HCT116 (cell line): ENCODE measurements at regions of chr7 and their contacts with region 1.

Region 1: GRCh38 chr7:106176414-106177299 is 64.5 kb upstream of the SYPL1 start:
- DNase-seq: peak; percentile 51
- ATAC-seq: peak; percentile 92
- H3K4me3 ChIP-seq: no peak overlapping the region
- H3K27ac ChIP-seq: no peak overlapping the region
- H3K4me1 ChIP-seq: peaks cover 0 to 9% of the 10 kb centered on the region in 2 experiments; a peak in 2 of 4 replicates
- H3K27me3 ChIP-seq: no peaks in the 10 kb centered on the region
- CTCF ChIP-seq: peak; percentile 91 to 96 (median 96)
- POLR2A ChIP-seq: no peak
- RAD21 ChIP-seq: peak; percentile 98

Region 2: DNA sequence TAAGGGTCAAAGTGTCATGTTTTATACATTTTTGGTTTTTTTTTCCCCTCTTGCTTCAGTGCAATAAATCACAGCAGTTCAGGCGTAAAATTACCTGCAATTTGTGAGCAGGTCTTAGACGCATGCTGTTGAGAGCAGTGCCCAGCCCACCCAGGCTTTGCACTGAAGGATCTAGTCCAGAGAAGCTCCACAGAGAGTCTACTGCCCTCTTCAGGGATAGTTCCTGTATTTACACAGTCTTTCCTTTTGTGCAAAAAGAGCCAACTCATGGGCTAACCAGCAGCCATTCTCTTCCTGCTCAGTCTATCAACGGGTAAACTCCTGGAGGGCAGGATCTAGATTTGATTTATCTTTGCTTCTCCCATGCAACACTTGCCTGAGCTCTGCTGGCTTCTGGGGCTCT is 190.4 kb after region 1 on chr7:
- CTCF ChIA-PET with region 1: interaction called, 5 read pairs
- POLR2A ChIA-PET with region 1: no interaction called
- RAD21 ChIA-PET with region 1: interaction called in 1 of 2 experiments, 3 read pairs
- intact Hi-C with region 1: loop called (anchors 5 kb)
- DNase-seq: no peak
- ATAC-seq: peak; percentile 71
- H3K4me3 ChIP-seq: no peak overlapping the region
- H3K27ac ChIP-seq: no peak overlapping the region
- H3K4me1 ChIP-seq: peaks cover 0 to 4% of the 10 kb centered on the region in 2 experiments; a peak in 1 of 4 replicates
- H3K27me3 ChIP-seq: no peaks in the 10 kb centered on the region
- CTCF ChIP-seq: peak; percentile 36 to 45 (median 40); a peak in 5 of 6 replicates
- POLR2A ChIP-seq: no peak
- RAD21 ChIP-seq: peak; percentile 70

Region 3: GRCh38 chr7:106520962-106521940 is 344.6 kb after region 1 on chr7:
- CTCF ChIA-PET with region 1: interaction called, 7 read pairs
- POLR2A ChIA-PET with region 1: no interaction called
- RAD21 ChIA-PET with region 1: interaction called in 1 of 2 experiments, 4 read pairs
- intact Hi-C with region 1: loop called (anchors 5 kb)
- DNase-seq: peak; percentile 19
- ATAC-seq: peak; percentile 76
- H3K4me3 ChIP-seq: no peak overlapping the region
- H3K27ac ChIP-seq: no peak overlapping the region
- H3K4me1 ChIP-seq: peaks cover 0 to 7% of the 10 kb centered on the region in 2 experiments; a peak in 1 of 4 replicates
- H3K27me3 ChIP-seq: no peaks in the 10 kb centered on the region
- CTCF ChIP-seq: peak; percentile 47 to 57 (median 50); a peak in 5 of 6 replicates
- POLR2A ChIP-seq: no peak
- RAD21 ChIP-seq: peak; percentile 48

Region 4: GRCh38 chr7:106659963-106660861 is 483.6 kb after region 1 on chr7:
- CTCF ChIA-PET with region 1: interaction called, 10 read pairs
- POLR2A ChIA-PET with region 1: no interaction called
- RAD21 ChIA-PET with region 1: interaction called in 1 of 2 experiments, 3 read pairs
- intact Hi-C with region 1: loop called (anchors 1 kb)
- DNase-seq: peak; percentile 75
- ATAC-seq: peak; percentile 74
- H3K4me3 ChIP-seq: peak overlapping the region; percentile 55 to 67
- H3K27ac ChIP-seq: peak overlapping the region; percentile 92
- H3K4me1 ChIP-seq: peaks cover 0 to 18% of the 10 kb centered on the region in 2 experiments; a peak in 3 of 4 replicates
- H3K27me3 ChIP-seq: no peaks in the 10 kb centered on the region
- CTCF ChIP-seq: peak; percentile 74 to 97 (median 91)
- POLR2A ChIP-seq: peak; percentile 25
- RAD21 ChIP-seq: peak; percentile 85

Region 5: DNA sequence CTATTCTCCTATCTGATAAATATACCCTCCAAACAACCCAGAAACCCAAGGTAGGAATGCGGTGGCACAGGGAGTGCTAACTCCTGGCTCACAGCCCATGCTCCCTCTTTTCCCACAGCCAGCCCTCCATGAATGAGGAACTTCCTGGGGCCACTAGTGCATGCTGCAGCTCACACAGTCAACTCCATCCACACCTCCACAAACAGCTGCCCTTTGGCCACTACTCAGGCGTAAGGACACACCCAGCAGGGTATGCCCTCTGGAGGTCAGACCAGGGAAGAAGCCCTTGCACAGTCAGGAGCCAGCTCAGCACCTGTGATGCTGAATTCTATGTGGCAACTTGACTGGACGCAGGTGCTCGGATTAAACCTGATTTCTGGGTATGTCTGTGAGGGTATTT is 603.2 kb after region 1 on chr7:
- CTCF ChIA-PET with region 1: interaction called, 8 read pairs
- POLR2A ChIA-PET with region 1: no interaction called
- RAD21 ChIA-PET with region 1: interaction called in 1 of 2 experiments, 3 read pairs
- intact Hi-C with region 1: loop called (anchors 1 kb)
- DNase-seq: peak; percentile 59
- ATAC-seq: peak; percentile 83
- H3K4me3 ChIP-seq: no peak overlapping the region
- H3K27ac ChIP-seq: peak overlapping the region; percentile 6; the same call in 1 of the 2 replicates
- H3K4me1 ChIP-seq: peaks cover 23 to 63% of the 10 kb centered on the region in 2 experiments
- H3K27me3 ChIP-seq: no peaks in the 10 kb centered on the region
- CTCF ChIP-seq: peak; percentile 58 to 66 (median 64); a peak in 5 of 6 replicates
- POLR2A ChIP-seq: no peak
- RAD21 ChIP-seq: peak; percentile 79